ENCODE measurements at regions of chr3 and their contacts with region 1.

Region 1: DNA sequence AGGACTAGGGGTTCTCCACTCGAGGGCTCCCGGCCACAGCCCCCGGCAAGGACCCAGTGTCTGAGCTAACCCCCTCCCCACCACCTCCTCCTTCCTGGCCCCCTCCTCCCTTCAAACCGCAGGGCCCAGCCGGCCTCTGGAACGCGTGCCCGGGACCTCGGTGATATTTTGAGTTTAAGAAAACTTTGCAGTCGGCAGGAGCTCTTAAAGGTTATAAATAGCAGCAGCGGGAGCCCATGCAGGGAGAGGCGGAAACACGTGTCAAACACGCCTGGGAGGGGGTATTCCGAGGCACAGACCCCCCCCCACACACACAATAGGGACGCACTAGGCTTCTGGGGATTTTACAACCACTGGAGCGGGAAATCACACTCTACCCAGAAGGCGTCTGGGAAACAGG is 3.1 kb upstream of the PTH1R start:
- DNase-seq: no peak
- ATAC-seq: peak; percentile 15

Region 2: GRCh38 chr3:46965151-46965550 is 90.7 kb after region 1 on chr3:
- intact Hi-C with region 1: no loop called
- DNase-seq: peak; percentile 60
- ATAC-seq: no peak

Region 3: DNA sequence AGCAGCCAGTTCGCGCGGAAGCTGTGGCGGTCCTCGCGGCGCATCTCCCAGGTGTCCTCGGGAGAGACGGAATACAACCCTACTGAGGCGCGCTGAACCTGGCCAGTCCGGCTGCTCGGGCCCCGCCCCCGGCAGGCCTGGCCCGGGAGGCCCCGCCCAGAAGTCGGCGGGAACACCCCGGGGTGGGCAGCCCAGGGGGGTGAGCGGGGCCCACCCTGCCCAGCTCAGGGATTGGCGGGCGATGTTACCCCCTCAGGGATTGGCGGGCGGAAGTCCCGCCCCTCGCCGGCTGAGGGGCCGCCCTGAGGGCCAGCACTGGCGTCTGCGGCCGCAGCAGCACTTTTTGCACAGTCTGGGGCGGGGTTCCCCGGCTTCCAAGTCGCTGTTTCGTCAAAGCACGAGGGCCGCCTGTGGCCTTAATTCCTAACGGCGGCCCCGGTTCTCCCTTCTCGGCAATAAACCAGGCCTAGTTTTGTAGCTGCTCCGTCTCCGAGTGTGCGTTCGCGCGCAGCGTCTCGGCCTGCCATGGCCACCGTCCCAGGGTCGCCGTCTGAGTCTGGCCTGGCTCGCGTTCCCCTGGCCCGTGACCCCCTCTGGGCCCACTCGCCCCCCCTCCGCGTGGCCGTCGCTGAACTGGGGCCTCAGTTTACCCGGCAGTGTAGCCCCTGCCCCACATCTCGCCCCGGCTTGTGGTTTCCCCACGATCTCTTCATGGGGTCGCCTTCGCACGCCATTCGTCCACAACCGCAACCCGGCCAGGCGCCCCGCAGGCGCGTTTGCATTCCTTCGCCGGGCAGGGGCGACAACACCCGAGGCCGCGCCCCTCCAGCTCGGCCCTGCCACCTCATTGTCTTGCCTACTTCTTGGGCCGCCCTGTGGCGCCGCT is 135.0 kb after region 1 on chr3:
- intact Hi-C with region 1: loop called (anchors 5 kb)
- DNase-seq: peak; percentile 92
- ATAC-seq: peak; percentile 96

Region 4: DNA sequence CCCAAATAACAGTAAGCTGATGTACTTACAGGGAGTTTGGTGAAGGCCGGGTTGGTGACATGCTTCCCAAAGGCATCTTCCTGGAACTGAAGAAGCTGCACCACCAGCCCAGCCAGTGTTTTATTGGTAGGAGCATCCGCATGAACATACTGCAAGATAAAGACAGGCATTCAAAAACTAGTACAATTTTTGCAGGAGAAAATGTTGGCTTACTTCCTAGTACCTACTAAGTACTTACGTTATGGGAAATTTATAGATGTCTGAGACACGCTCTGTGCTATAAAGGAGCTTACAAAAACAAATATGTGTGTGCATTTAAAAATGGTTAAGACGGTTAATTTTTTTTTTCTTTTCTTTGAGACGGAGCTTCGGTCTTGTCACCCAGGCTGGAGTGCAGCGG is 898.4 kb after region 1 on chr3:
- intact Hi-C with region 1: loop called (anchors 5 kb)
- DNase-seq: no peak
- ATAC-seq: no peak

Measured in Right ventricle myocardium inferior (tissue), 1 donor.